ENCODE measurements at regions of chr3 and their contacts with region 1.

Region 1: GRCh38 chr3:101512646-101513418 is at the start of gene SENP7:
- DNase-seq: peak; percentile 65 to 91
- ATAC-seq: peak; percentile 59 to 74 (median 73)
- H3K4me3 ChIP-seq: peak within 1 kb of the TSS; percentile 89
- H3K4me3 Mint-ChIP-seq: peak within 1 kb of the TSS; percentile 98
- H3K27ac ChIP-seq: peak within 1 kb of the TSS; percentile 90
- H3K27ac Mint-ChIP-seq: peak within 1 kb of the TSS; percentile 96 to 99
- H3K4me1 ChIP-seq: peaks cover 11% of the 10 kb centered on the region
- H3K4me1 Mint-ChIP-seq: peaks cover 36 to 44% of the 10 kb centered on the region in 2 donors
- H3K27me3 ChIP-seq: no peaks in the 10 kb centered on the region
- H3K27me3 Mint-ChIP-seq: peaks cover 0 to 5% of the 10 kb centered on the region in 2 donors
- CTCF ChIP-seq: no peak
- total RNA-seq, gene SENP7: 41.4 to 60.6 (median 52.7) TPM

Region 2: DNA sequence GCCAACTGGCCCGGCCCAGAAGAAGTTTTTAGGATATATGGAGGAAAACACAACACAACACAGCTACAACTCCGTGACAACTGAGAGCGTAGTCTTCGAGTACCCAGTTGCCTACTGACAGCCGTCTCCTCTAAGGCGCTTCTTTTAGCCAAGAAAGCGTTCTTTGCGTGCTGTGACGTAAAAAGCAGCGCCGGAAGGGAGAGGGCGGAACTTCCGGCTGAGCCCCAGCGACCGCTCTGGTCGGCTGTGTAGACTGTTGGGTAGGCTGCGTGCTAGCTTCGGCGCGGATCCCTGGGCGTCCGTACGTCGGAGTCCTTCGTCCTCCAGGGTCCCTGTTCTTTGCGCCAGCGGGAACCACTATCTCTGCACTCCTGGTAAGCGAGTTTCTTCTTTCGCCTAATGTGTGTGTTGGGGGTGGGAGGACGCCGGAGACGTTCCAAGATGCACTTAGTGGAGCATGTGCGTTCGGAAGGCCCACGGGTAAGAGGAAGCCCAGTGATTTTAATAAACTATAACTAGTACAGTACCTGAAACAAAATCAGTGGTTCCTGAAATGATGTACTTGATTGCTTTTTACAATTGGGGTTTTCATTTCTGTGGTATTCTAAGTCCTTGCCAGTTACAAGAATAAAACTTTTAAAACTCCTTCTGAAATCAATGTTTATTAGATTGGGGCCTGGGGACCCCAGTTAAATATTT is 48.9 kb after region 1 on chr3 and contains the start of gene TRMT10C:
- intact Hi-C with region 1: loop called (anchors 1 kb)
- DNase-seq: peak; percentile 89 to 97
- ATAC-seq: peak; percentile 96 to 97 (median 96)
- H3K4me3 ChIP-seq: peak within 1 kb of the TSS; percentile 91
- H3K4me3 Mint-ChIP-seq: peak within 1 kb of the TSS; percentile 94
- H3K27ac ChIP-seq: peak within 1 kb of the TSS; percentile 91
- H3K27ac Mint-ChIP-seq: peak within 1 kb of the TSS; percentile 87 to 91
- H3K4me1 ChIP-seq: peaks cover 13% of the 10 kb centered on the region
- H3K4me1 Mint-ChIP-seq: peaks cover 18 to 20% of the 10 kb centered on the region in 2 donors
- H3K27me3 ChIP-seq: peaks cover 9% of the 10 kb centered on the region
- H3K27me3 Mint-ChIP-seq: peaks cover 7 to 12% of the 10 kb centered on the region in 2 donors
- CTCF ChIP-seq: no peak
- total RNA-seq, gene TRMT10C: 18.4 to 19.1 (median 19.0) TPM

Measured in natural killer cell (primary cell).